ENCODE measurements at regions of chr2 and their contacts with region 1.

Region 1: GRCh38 chr2:160022162-160022561 is 40.3 kb downstream of the PLA2R1 start:
- DNase-seq: no peak
- ATAC-seq: no peak
- H3K4me3 ChIP-seq: no peak overlapping the region
- H3K27ac ChIP-seq: no peak overlapping the region
- H3K4me1 ChIP-seq: no peaks in the 10 kb centered on the region
- H3K27me3 ChIP-seq: peaks cover 2% of the 10 kb centered on the region; the same call in 1 of the 2 replicates
- CTCF ChIP-seq: peak; percentile 19; the same call in 1 of the 2 replicates
- POLR2A ChIP-seq: no peak
- RAD21 ChIP-seq: peak; percentile 10; the same call in 1 of the 2 replicates

Region 2: DNA sequence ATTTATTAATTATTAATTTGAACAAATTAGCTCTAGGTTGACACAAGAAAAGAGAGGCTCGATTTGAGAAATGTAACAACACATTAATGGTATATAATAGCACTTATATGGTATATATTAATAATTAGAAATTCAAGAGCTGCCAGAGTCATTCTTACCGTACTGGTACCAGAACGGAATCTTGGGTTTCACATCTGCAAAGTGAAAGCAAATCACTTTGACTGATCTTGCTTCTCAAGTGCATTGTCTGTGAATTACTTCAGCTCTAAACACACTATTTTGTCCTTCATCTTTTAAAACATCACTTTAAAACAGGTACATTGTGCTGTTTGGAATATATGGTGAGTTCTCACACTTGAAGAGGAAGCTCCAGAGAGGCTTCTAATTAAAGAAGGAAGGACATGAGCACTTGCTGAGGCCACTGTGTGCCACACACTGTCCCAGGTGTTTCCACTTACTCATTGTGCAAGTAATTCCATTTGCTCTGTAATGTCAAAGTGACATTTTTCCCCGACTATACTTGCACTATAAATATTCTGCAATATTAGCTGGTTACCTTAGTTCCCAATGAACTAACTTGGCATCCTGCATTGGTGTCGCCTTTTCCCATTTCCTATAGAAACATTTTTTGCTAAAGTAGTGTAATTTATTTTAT is 45.5 kb before region 1 on chr2:
- CTCF ChIA-PET with region 1: no interaction called
- POLR2A ChIA-PET with region 1: no interaction called
- dilution Hi-C with region 1: no loop called
- in situ Hi-C with region 1: no loop called
- intact Hi-C with region 1: loop called (anchors 5 kb)
- DNase-seq: no peak
- ATAC-seq: no peak
- H3K4me3 ChIP-seq: no peak overlapping the region
- H3K27ac ChIP-seq: no peak overlapping the region
- H3K4me1 ChIP-seq: no peaks in the 10 kb centered on the region
- H3K27me3 ChIP-seq: peaks cover 3% of the 10 kb centered on the region; the same call in 1 of the 2 replicates
- CTCF ChIP-seq: no peak
- POLR2A ChIP-seq: no peak
- RAD21 ChIP-seq: no peak

Region 3: GRCh38 chr2:160294339-160294803 is 272.2 kb after region 1 on chr2:
- CTCF ChIA-PET with region 1: no interaction called
- POLR2A ChIA-PET with region 1: no interaction called
- dilution Hi-C with region 1: no loop called
- in situ Hi-C with region 1: no loop called
- intact Hi-C with region 1: no loop called
- DNase-seq: peak; percentile 92
- ATAC-seq: peak; percentile 52
- H3K4me3 ChIP-seq: no peak overlapping the region
- H3K27ac ChIP-seq: peak overlapping the region; percentile 68
- H3K4me1 ChIP-seq: peaks cover 35% of the 10 kb centered on the region
- H3K27me3 ChIP-seq: no peaks in the 10 kb centered on the region
- CTCF ChIP-seq: no peak
- POLR2A ChIP-seq: no peak
- RAD21 ChIP-seq: no peak